ENCODE measurements at regions of chr9 and their contacts with region 1.

Region 1: GRCh38 chr9:77488439-77489126 is 159.5 kb downstream of the GNA14 start:
- DNase-seq: no peak
- ATAC-seq: peak; percentile 72
- H3K4me3 ChIP-seq: no peak overlapping the region
- H3K27ac ChIP-seq: no peak overlapping the region
- H3K4me1 ChIP-seq: no peaks in the 10 kb centered on the region
- H3K27me3 ChIP-seq: no peaks in the 10 kb centered on the region
- CTCF ChIP-seq: peak; percentile 13 to 44 (median 31); a peak in 4 of 6 replicates
- EP300 ChIP-seq: no peak
- POLR2A ChIP-seq: no peak
- RAD21 ChIP-seq: peak; percentile 70

Region 2: DNA sequence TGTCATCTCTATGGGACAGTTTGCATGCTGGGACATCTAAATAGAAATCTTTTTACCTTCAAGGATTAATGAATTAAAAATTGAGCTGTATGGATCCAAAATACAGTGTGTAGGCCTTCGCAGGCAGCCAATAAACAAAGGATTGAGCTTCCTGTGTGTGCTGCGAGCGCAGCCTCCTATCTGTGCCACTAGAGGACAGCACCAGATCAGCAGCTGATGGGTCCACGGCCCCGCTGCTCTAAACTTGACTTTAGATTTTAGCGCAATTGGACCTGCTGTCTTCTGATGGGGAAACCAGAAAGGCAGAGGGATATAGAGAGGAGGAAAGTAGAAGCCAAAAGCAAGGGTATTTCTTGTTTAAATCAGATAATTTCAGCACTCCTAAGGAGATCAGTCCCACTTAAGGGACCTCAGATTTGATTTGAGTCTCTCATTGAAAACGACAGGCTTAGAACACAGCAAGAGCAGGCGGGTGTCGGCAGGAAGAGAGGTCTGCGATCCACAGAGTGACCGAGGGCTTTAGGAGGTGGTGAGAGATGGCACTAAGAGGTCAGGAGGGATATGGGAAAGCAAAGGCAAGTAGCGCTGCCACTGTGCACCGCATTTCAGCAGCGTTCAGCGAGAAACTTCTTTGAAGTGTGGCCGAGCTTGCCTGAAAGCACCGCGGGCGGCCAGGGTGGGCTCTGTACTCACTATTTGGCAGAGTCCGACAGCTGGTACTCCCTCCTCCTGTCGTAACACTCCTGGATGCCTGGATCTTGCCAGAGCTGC is 54.7 kb before region 1 on chr9:
- CTCF ChIA-PET with region 1: interaction called, 5 read pairs
- POLR2A ChIA-PET with region 1: no interaction called
- RAD21 ChIA-PET with region 1: interaction called, 5 read pairs
- SMC1A ChIA-PET with region 1: interaction called, 3 read pairs
- in situ Hi-C with region 1: no loop called
- intact Hi-C with region 1: loop called (anchors 2 kb)
- DNase-seq: no peak
- ATAC-seq: peak; percentile 96
- H3K4me3 ChIP-seq: no peak overlapping the region
- H3K27ac ChIP-seq: no peak overlapping the region
- H3K4me1 ChIP-seq: no peaks in the 10 kb centered on the region
- H3K27me3 ChIP-seq: no peaks in the 10 kb centered on the region
- CTCF ChIP-seq: peak; percentile 80 to 94 (median 88)
- EP300 ChIP-seq: no peak
- POLR2A ChIP-seq: no peak
- RAD21 ChIP-seq: peak; percentile 88

Region 3: GRCh38 chr9:77469515-77470231 is 18.9 kb before region 1 on chr9:
- CTCF ChIA-PET with region 1: no interaction called
- POLR2A ChIA-PET with region 1: no interaction called
- RAD21 ChIA-PET with region 1: no interaction called
- SMC1A ChIA-PET with region 1: no interaction called
- in situ Hi-C with region 1: no loop called
- intact Hi-C with region 1: no loop called
- DNase-seq: no peak
- ATAC-seq: no peak
- H3K4me3 ChIP-seq: no peak overlapping the region
- H3K27ac ChIP-seq: no peak overlapping the region
- H3K4me1 ChIP-seq: no peaks in the 10 kb centered on the region
- H3K27me3 ChIP-seq: no peaks in the 10 kb centered on the region; a peak in 1 of 4 replicates
- CTCF ChIP-seq: no peak
- EP300 ChIP-seq: no peak
- POLR2A ChIP-seq: no peak
- RAD21 ChIP-seq: no peak